ENCODE measurements at regions of chr5 and their contacts with region 1.

Region 1: GRCh38 chr5:113294311-113295110 is 140.3 kb downstream of the TSSK1B start:
- DNase-seq: peak; percentile 76 to 88 (median 80)
- ATAC-seq: peak; percentile 92 to 96 (median 95)
- H3K4me3 ChIP-seq: peak overlapping the region; percentile 46 to 84 (median 62)
- H3K27ac ChIP-seq: peak overlapping the region in 3 of 4 donors; percentile 76 to 78 (median 77)
- H3K4me1 ChIP-seq: peaks cover 0 to 5% (median 0%) of the 10 kb centered on the region in 3 donors
- H3K27me3 ChIP-seq: no peaks in the 10 kb centered on the region
- CTCF ChIP-seq: no peak

Region 2: GRCh38 chr5:112025757-112026156 is 1268.8 kb before region 1 on chr5:
- intact Hi-C with region 1: loop called in 1 of 3 experiments (anchors 10 kb)
- DNase-seq: no peak
- ATAC-seq: no peak
- H3K4me3 ChIP-seq: no peak overlapping the region
- H3K27ac ChIP-seq: no peak overlapping the region
- H3K4me1 ChIP-seq: no peaks in the 10 kb centered on the region
- H3K27me3 ChIP-seq: no peaks in the 10 kb centered on the region
- CTCF ChIP-seq: no peak